ENCODE measurements at regions of chr5 and their contacts with region 1.

Region 1: GRCh38 chr5:56814963-56815658 is at the start of gene MAP3K1:
- DNase-seq: peak; percentile 83
- H3K4me3 Mint-ChIP-seq: peak within 1 kb of the TSS; percentile 96
- H3K27ac Mint-ChIP-seq: peak within 1 kb of the TSS; percentile 94
- H3K4me1 Mint-ChIP-seq: peaks cover 43% of the 10 kb centered on the region
- H3K27me3 Mint-ChIP-seq: peaks cover 3% of the 10 kb centered on the region
- total RNA-seq, gene MAP3K1: 47.5 to 49.5 TPM

Region 2: DNA sequence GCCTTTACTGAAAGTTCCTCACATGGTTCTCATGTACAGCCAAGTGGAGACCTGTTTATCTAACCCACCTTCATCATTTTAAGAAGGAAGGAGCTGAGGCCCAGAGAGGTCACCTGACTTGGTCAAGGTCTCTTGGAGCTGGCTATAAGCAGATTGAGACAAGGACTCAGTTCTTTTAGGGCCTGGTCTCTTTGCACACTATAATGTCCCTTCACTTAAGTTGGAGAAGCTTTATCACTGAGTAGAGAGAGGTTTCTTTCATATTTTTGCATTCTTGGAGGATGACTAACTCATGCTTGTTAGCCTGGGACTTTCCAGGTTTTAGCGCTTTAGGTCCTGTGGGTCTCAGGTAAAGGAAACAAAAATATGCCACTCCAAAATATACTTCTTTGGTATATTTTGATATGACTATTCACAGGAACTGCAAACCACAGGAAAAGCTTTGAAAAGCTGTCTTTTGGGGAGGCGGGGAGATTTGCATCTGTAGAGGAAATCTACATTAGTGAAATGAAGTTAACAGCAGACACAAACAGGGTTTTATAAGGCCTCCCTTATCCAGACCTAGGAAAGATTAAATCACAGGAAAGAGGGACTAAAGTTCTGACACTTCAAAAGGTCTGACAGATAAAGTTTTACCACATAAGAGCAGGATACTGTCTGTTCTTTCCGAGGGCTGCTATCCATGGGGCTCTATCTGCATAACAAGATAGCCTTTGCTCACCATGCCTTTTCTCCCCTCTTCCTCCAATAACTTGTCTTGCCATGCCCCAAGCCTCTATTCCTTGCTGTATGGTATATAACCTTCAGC is 486.2 kb before region 1 on chr5:
- CTCF ChIA-PET with region 1: interaction called, 3 read pairs
- POLR2A ChIA-PET with region 1: interaction called, 21 read pairs
- DNase-seq: peak; percentile 52
- H3K4me3 Mint-ChIP-seq: peak overlapping the region; percentile 29
- H3K27ac Mint-ChIP-seq: peak overlapping the region; percentile 82
- H3K4me1 Mint-ChIP-seq: peaks cover 61% of the 10 kb centered on the region
- H3K27me3 Mint-ChIP-seq: no peaks in the 10 kb centered on the region

Region 3: GRCh38 chr5:56737002-56737621 is 78.0 kb before region 1 on chr5:
- CTCF ChIA-PET with region 1: interaction called, 3 read pairs
- POLR2A ChIA-PET with region 1: interaction called, 21 read pairs
- DNase-seq: peak; percentile 21
- H3K4me3 Mint-ChIP-seq: peak overlapping the region; percentile 5
- H3K27ac Mint-ChIP-seq: peak overlapping the region; percentile 75
- H3K4me1 Mint-ChIP-seq: peaks cover 30% of the 10 kb centered on the region
- H3K27me3 Mint-ChIP-seq: no peaks in the 10 kb centered on the region

Region 4: GRCh38 chr5:56827049-56827448 is 11.9 kb after region 1 on chr5:
- CTCF ChIA-PET with region 1: interaction called, 3 read pairs
- POLR2A ChIA-PET with region 1: interaction called, 21 read pairs
- DNase-seq: no peak
- H3K4me3 Mint-ChIP-seq: no peak overlapping the region
- H3K27ac Mint-ChIP-seq: peak overlapping the region; percentile 49
- H3K4me1 Mint-ChIP-seq: peaks cover 86% of the 10 kb centered on the region
- H3K27me3 Mint-ChIP-seq: no peaks in the 10 kb centered on the region

Measured in activated CD4-positive, alpha-beta memory T cell treated with anti-CD3 and anti-CD28 coated beads, Interleukin-2, amount 10 ng/mL, durations not matched to agents 7 days and 5 days (primary cell).